Activated T-helper 1 cell treated with anti-CD3 and anti-CD28 coated beads, Interleukin-12 subunit alpha, Interleukin-12 subunit beta, Interleukin-2, Interleukin-4 antibody, amounts not matched to agents 30 ng/mL and 10 ng/mL and 1 ng/mL, durations not matched to agents 14 hours and 24 hours and 36 hours (primary cell): ENCODE measurements at regions of chr22 and their contacts with region 1.

Region 1: GRCh38 chr22:46791201-46791731 is 28.8 kb downstream of the TBC1D22A start:
- DNase-seq: peak; percentile 71
- H3K4me3 Mint-ChIP-seq: peak overlapping the region; percentile 78
- H3K27ac Mint-ChIP-seq: peak overlapping the region; percentile 99
- H3K4me1 Mint-ChIP-seq: peaks cover 49% of the 10 kb centered on the region
- H3K27me3 Mint-ChIP-seq: no peaks in the 10 kb centered on the region

Region 2: GRCh38 chr22:46774253-46774979 is 16.9 kb before region 1 on chr22:
- intact Hi-C with region 1: loop called (anchors 1 kb)
- DNase-seq: no peak
- H3K4me3 Mint-ChIP-seq: peak overlapping the region; percentile 78
- H3K27ac Mint-ChIP-seq: peak overlapping the region; percentile 86
- H3K4me1 Mint-ChIP-seq: peaks cover 70% of the 10 kb centered on the region
- H3K27me3 Mint-ChIP-seq: no peaks in the 10 kb centered on the region